ENCODE measurements at regions of chr6 and their contacts with region 1.

Region 1: GRCh38 chr6:53718597-53719460 is 53.3 kb upstream of the KLHL31 start:
- DNase-seq: peak; percentile 59
- H3K27ac ChIP-seq: no peak overlapping the region
- CTCF ChIP-seq: peak; percentile 83

Region 2: DNA sequence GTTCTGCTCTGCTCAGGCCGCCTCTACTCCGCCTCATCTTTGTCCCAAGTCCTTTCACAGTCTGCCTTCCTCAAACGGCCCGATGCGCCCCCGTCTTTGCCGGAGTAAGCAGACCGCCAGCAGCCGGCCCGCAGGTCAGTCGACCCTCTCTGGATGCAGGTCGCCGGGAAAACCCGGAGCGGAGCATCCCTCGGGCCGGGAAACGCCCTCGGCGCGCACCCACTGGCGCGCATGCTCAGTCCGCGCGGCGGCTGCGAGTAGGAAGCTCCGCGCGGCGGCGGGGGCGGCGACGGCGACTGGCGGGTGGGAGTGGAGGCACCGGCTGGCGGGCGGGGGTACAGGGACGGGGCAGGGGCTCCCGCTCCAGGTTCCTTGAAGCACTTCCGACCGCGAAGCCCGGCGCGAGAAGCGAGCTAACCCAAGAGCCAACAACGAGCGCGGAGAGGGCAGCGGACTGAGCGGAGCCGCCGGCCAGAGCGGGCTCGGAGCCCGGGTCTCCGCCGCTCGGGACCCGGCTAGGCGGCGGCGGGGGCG is 76.0 kb after region 1 on chr6 and contains the start of gene LRRC1:
- CTCF ChIA-PET with region 1: interaction called, 13 read pairs
- POLR2A ChIA-PET with region 1: no interaction called
- DNase-seq: peak; percentile 88
- H3K27ac ChIP-seq: peak within 1 kb of the TSS; percentile 86
- CTCF ChIP-seq: no peak

Measured in RWPE1 (cell line).